Posterior vena cava (tissue), 2 donors: ENCODE measurements at regions of chr2 and their contacts with region 1.

Region 1: GRCh38 chr2:228344531-228344930 is 163.0 kb upstream of the SPHKAP start:
- DNase-seq: no peak

Region 2: DNA sequence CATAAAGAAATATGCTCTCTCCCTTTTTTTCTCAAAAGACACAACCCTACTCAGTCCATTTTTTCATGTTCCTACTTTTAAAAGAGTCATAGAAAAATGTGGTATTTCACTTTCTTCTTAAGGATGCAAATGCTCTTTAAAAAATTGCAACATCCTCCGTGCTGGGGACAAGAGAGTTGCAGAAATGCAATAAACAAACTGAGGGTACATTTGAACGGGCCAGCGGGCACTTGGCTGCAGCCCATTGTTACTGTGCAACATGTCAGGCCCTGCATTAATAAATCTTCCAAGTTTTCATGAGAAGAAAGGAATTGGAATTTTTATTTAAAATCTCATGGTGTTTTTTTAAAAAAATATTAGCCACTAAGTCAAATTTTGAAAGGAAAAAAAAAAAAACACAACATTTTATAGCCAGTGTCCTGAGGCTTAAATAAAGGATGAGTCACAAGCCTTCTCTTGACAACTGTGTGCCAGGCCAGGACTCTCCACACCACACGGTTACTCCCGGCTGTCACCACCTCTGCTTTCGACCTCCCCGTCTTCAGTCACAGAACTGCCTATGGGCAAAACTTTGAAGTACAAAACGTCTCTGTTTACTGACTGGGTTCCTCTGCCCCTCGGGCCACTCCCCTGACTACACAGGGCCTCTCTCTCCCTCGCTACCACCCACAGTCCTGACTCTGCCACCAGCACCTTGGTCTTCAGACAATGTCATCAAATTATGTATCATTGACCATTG is 1077.0 kb before region 1 on chr2:
- intact Hi-C with region 1: no loop called
- DNase-seq: no peak

Region 3: GRCh38 chr2:228377533-228377932 is 33.0 kb after region 1 on chr2:
- intact Hi-C with region 1: loop called in 1 of 2 experiments (anchors 1 kb)
- DNase-seq: no peak